ENCODE measurements at regions of chrX and their contacts with region 1.

Region 1: GRCh38 chrX:95071052-95071451 is 1397.0 kb downstream of the FAM133A start:
- DNase-seq: no peak
- H3K4me3 Mint-ChIP-seq: no peak overlapping the region
- H3K27ac Mint-ChIP-seq: no peak overlapping the region
- H3K4me1 Mint-ChIP-seq: peaks cover 5% of the 10 kb centered on the region
- H3K27me3 Mint-ChIP-seq: peaks cover 41% of the 10 kb centered on the region
- CTCF ChIP-seq: no peak

Region 2: GRCh38 chrX:95056901-95057300 is 14.2 kb before region 1 on chrX:
- CTCF ChIA-PET with region 1: interaction called, 13 read pairs
- POLR2A ChIA-PET with region 1: interaction called, 5 read pairs
- intact Hi-C with region 1: loop called (anchors 1 kb)
- DNase-seq: peak; percentile 54
- H3K4me3 Mint-ChIP-seq: no peak overlapping the region
- H3K27ac Mint-ChIP-seq: no peak overlapping the region
- H3K4me1 Mint-ChIP-seq: peaks cover 10% of the 10 kb centered on the region
- H3K27me3 Mint-ChIP-seq: peaks cover 45% of the 10 kb centered on the region
- CTCF ChIP-seq: peak; percentile 33

Measured in MCF 10A (cell line).